PC-9 (cell line): ENCODE measurements at regions of chr21 and their contacts with region 1.

Region 1: DNA sequence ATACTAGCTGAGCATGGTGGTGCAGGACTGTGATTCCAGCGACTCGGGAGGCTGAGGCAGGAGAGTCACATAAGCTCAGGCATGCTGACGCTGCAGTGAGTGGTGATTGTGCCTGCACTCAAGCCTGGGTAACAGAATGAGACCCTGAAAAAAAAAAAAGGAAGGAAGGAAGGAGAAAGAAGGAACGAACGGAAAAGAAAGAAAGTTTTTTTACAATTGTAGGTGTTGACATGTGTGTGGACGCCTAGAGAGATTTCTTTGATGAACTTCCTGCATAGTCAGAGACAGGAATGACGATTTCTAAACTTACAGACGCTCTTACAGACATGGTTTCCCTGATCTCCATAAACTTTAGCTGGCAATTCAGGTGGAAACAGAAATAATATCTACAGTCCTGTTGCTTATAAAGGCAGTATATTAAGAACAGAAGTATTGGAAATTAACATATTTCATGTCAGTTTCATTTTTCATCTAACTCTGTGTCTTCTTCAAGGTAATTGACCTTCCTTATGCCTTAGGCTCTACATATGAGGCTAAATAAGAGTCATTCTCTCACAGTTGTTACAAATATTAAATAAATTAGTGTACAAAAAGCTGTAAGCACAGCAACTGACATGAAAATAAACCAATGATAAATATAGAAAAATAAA is 4.1 kb downstream of the SAMSN1 start:
- DNase-seq: no peak
- H3K4me3 ChIP-seq: no peak overlapping the region
- H3K27ac ChIP-seq: no peak overlapping the region
- H3K4me1 ChIP-seq: no peaks in the 10 kb centered on the region
- H3K27me3 ChIP-seq: no peaks in the 10 kb centered on the region
- CTCF ChIP-seq: no peak

Region 2: DNA sequence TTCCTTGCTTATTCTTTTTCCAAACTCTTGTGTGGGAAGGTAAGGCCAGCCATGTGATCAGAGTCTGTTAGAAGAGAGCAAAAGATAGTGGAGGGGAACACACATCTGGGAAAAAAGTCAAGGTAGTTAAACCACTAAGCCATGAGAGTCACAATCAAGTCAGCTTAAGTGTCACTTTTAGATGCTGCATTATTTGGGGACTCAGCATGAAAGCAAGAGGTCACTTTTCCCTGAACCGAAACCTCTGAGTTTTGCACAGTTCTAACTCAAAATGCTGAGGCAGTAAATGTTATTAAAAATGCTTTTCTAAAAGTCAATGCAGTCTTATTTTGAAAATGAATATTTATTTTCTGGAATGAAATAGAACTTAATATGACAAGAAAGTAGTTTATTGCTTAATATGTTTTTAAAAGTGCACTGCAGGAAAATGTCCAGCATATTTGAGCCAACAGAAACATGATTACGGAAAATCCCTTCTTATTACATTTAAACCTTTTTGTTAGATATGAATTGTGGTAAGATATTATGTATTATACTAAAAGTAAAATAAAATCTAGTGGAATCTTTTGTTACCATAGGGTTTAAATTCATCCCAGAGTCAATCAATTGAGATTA is 256.7 kb before region 1 on chr21:
- CTCF ChIA-PET with region 1: interaction called, 19 read pairs
- POLR2A ChIA-PET with region 1: no interaction called
- intact Hi-C with region 1: no loop called
- DNase-seq: no peak
- H3K4me3 ChIP-seq: no peak overlapping the region
- H3K27ac ChIP-seq: no peak overlapping the region
- H3K4me1 ChIP-seq: no peaks in the 10 kb centered on the region
- H3K27me3 ChIP-seq: no peaks in the 10 kb centered on the region
- CTCF ChIP-seq: no peak

Region 3: GRCh38 chr21:14499316-14499715 is 42.6 kb before region 1 on chr21:
- CTCF ChIA-PET with region 1: no interaction called
- POLR2A ChIA-PET with region 1: no interaction called
- intact Hi-C with region 1: no loop called
- DNase-seq: no peak
- H3K4me3 ChIP-seq: no peak overlapping the region
- H3K27ac ChIP-seq: no peak overlapping the region
- H3K4me1 ChIP-seq: no peaks in the 10 kb centered on the region
- H3K27me3 ChIP-seq: no peaks in the 10 kb centered on the region
- CTCF ChIP-seq: no peak